ENCODE measurements at regions of chr11 and their contacts with region 1.

Region 1: GRCh38 chr11:66311965-66312548 is 4.8 kb downstream of the CD248 start:
- DNase-seq: peak; percentile 99
- H3K4me3 Mint-ChIP-seq: peak overlapping the region; percentile 91
- H3K27ac Mint-ChIP-seq: peak overlapping the region; percentile 97
- H3K4me1 Mint-ChIP-seq: peaks cover 19% of the 10 kb centered on the region
- H3K27me3 Mint-ChIP-seq: peaks cover 7% of the 10 kb centered on the region

Region 2: GRCh38 chr11:65833297-65834030 is 478.6 kb before region 1 on chr11 and contains the start of gene SNX32:
- intact Hi-C with region 1: no loop called
- DNase-seq: peak; percentile 99
- H3K4me3 Mint-ChIP-seq: no peak within 1 kb of the TSS
- H3K27ac Mint-ChIP-seq: no peak within 1 kb of the TSS
- H3K4me1 Mint-ChIP-seq: peaks cover 21% of the 10 kb centered on the region
- H3K27me3 Mint-ChIP-seq: peaks cover 20% of the 10 kb centered on the region
- total RNA-seq, gene SNX32: 1.2 and 2.1 TPM in 2 replicates

Region 3: DNA sequence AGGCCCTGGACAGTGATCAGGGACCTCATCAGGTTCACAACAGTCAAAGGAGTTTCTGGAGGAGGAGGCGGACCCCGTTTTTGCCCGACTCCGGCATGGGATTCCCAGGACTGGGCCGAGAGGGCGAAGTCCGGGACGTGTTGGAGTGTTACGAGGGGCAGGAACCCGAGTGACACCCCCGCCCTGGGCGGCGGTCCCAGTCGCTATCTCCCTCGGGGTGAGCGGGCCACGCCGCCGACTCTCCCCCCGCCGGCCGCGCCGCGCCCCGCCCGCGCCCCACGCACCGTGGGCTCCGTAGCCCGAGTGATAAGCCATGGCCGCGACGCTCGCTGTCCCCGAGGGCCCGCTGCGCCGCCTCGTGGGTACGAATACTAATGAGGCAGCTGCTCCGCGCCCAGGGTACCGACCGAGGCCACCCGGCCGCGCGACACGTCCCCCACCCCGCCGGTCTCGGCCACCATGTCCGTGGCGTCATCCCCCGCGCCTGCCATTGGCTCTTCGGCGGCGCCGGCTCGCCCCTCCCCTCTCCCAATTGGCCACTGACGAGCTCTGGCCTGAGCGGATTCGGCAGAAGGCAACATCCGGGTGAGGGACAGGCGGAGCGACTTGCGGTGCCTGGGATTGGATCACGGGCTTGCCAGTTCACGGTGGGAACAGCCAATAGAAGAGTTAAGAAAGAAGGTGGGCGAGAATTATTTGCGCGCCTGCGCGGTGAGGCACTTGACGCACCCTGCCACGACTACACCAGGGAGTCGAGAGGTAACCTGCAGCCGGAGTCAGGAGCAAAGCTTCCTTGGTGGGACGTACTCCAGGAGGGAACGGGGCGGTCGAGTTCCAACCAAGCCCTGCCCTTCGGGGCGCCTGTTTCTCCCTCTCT is 23.1 kb before region 1 on chr11 and contains the start of gene YIF1A:
- intact Hi-C with region 1: loop called (anchors 1 kb)
- DNase-seq: peak; percentile 100
- H3K4me3 Mint-ChIP-seq: peak within 1 kb of the TSS; percentile 84
- H3K27ac Mint-ChIP-seq: peak within 1 kb of the TSS; percentile 96
- H3K4me1 Mint-ChIP-seq: peaks cover 32% of the 10 kb centered on the region
- H3K27me3 Mint-ChIP-seq: peaks cover 30% of the 10 kb centered on the region
- total RNA-seq, gene YIF1A: 108 and 119 TPM in 2 replicates

Region 4: DNA sequence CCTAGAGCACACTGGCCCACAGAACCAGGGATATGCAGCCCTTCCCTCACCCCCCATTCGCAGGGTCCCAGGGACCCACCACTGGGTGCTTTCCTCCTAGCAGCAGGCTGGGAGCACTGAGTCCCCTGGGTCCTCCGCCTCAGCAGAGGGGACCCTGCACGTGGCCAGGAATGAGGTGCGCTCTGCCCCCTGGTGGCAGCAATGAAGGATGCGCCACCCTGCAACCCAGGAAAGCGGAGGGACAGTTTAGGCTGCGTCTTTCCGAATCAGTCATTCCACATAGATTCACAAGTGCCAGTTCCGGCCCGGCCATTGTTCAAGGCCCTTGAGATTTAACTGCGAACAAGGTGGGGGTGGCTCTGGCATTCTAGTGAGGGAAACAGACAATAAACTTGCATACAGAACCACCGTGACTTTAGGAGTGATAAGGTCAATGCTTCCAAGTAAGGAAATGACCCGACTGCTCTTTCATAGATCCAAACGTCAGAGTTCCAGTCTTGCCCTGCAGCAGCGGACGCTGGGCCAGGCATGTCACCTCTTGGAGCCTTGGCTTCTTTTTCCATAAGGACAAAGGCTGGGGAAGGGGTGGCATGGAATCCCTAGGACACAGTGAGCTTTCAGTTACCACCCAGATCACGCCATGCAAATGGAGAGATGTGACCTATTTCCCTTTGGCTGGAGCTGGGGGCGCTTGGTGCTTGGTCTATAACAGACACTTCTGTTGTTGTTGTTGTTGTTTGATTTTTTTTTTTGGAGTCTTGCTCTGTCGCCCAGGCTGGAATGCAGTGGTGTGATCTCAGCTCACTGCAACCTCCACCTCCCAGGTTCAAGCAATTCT is 16.5 kb after region 1 on chr11:
- intact Hi-C with region 1: loop called (anchors 1 kb)
- DNase-seq: peak; percentile 94
- H3K4me3 Mint-ChIP-seq: peak overlapping the region; percentile 34
- H3K27ac Mint-ChIP-seq: peak overlapping the region; percentile 72
- H3K4me1 Mint-ChIP-seq: peaks cover 36% of the 10 kb centered on the region
- H3K27me3 Mint-ChIP-seq: no peaks in the 10 kb centered on the region

Region 5: GRCh38 chr11:66386171-66387069 is 74.4 kb after region 1 on chr11:
- intact Hi-C with region 1: loop called (anchors 1 kb)
- DNase-seq: peak; percentile 95
- H3K4me3 Mint-ChIP-seq: peak overlapping the region; percentile 58
- H3K27ac Mint-ChIP-seq: no peak overlapping the region
- H3K4me1 Mint-ChIP-seq: peaks cover 8% of the 10 kb centered on the region
- H3K27me3 Mint-ChIP-seq: peaks cover 5% of the 10 kb centered on the region